Panc1 (cell line): ENCODE measurements at regions of chr9 and their contacts with region 1.

Region 1: GRCh38 chr9:123684393-123685149 is 245.4 kb downstream of the DENND1A start:
- DNase-seq: no peak
- ATAC-seq: no peak
- H3K4me3 ChIP-seq: no peak overlapping the region
- H3K27ac ChIP-seq: no peak overlapping the region
- H3K4me1 ChIP-seq: peaks cover 3% of the 10 kb centered on the region; the same call in 1 of the 2 replicates
- H3K27me3 ChIP-seq: no peaks in the 10 kb centered on the region
- CTCF ChIP-seq: no peak

Region 2: GRCh38 chr9:122991370-122991830 is 693.2 kb before region 1 on chr9:
- CTCF ChIA-PET with region 1: no interaction called
- POLR2A ChIA-PET with region 1: interaction called, 10 read pairs
- in situ Hi-C with region 1: no loop called
- intact Hi-C with region 1: no loop called
- DNase-seq: peak; percentile 13
- ATAC-seq: peak; percentile 60; the same call in 1 of the 2 replicates
- H3K4me3 ChIP-seq: no peak overlapping the region
- H3K27ac ChIP-seq: no peak overlapping the region
- H3K4me1 ChIP-seq: no peaks in the 10 kb centered on the region
- H3K27me3 ChIP-seq: no peaks in the 10 kb centered on the region
- CTCF ChIP-seq: peak; percentile 64

Region 3: DNA sequence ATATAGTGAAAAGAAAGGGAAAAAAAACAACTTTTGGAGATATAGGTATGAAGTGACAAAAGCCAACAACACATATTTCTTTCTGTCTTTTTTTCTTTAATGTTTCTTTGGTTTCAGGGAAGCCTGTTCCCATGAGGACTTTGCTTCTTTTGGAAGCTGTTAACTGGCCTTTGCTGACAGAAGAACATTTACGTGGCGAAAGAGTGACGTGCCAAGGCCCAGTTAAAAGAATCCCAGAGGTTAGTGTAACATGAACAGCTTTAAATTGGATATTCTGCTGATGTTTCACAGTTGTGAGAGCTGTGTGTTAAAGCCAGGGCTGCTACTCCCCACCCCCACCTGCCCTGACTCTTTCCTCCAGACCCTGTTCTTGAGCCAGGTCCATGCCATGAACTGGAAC is 52.7 kb before region 1 on chr9:
- CTCF ChIA-PET with region 1: no interaction called
- POLR2A ChIA-PET with region 1: interaction called, 10 read pairs
- in situ Hi-C with region 1: no loop called
- intact Hi-C with region 1: no loop called
- DNase-seq: no peak
- ATAC-seq: no peak
- H3K4me3 ChIP-seq: no peak overlapping the region
- H3K27ac ChIP-seq: no peak overlapping the region
- H3K4me1 ChIP-seq: no peaks in the 10 kb centered on the region
- H3K27me3 ChIP-seq: no peaks in the 10 kb centered on the region
- CTCF ChIP-seq: no peak

Region 4: GRCh38 chr9:123807251-123807650 is 122.7 kb after region 1 on chr9:
- CTCF ChIA-PET with region 1: no interaction called
- POLR2A ChIA-PET with region 1: no interaction called
- in situ Hi-C with region 1: no loop called
- intact Hi-C with region 1: no loop called
- DNase-seq: no peak
- ATAC-seq: no peak
- H3K4me3 ChIP-seq: no peak overlapping the region
- H3K27ac ChIP-seq: no peak overlapping the region
- H3K4me1 ChIP-seq: no peaks in the 10 kb centered on the region
- H3K27me3 ChIP-seq: no peaks in the 10 kb centered on the region
- CTCF ChIP-seq: no peak